Right cardiac atrium (tissue), 5 donors: ENCODE measurements at regions of chr6 and their contacts with region 1.

Region 1: GRCh38 chr6:150238336-150238741 is 95.5 kb downstream of the PPP1R14C start:
- DNase-seq: peak; percentile 33 to 72 (median 71)
- ATAC-seq: peak; percentile 82 to 90
- H3K4me3 ChIP-seq: no peak overlapping the region
- H3K27ac ChIP-seq: no peak overlapping the region
- H3K4me1 ChIP-seq: peaks cover 3% of the 10 kb centered on the region
- H3K27me3 ChIP-seq: no peaks in the 10 kb centered on the region

Region 2: GRCh38 chr6:149834513-149835481 is 403.5 kb before region 1 on chr6:
- intact Hi-C with region 1: no loop called
- DNase-seq: peak in 1 of 3 donors; percentile 60
- ATAC-seq: peak; percentile 38 to 47
- H3K4me3 ChIP-seq: no peak overlapping the region
- H3K27ac ChIP-seq: no peak overlapping the region
- H3K4me1 ChIP-seq: no peaks in the 10 kb centered on the region
- H3K27me3 ChIP-seq: no peaks in the 10 kb centered on the region

Region 3: DNA sequence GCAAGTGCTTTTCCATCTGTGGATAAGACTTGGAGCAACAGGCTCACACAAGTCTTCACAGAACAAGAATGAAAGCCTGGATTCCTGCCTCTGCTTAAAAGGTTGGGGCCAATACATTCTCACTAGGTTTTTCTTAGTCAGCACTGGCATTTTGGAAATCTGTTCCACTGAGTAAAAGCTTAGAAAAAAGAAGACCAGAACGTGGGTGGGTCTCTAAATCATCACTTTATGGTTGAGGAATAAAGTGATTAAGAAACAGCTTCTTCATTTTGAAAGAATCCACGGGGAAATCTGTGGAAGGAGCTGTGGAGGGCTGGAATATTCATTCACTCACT is 84.8 kb before region 1 on chr6:
- intact Hi-C with region 1: loop called in 1 of 4 experiments (anchors 10 kb)
- DNase-seq: no peak
- ATAC-seq: no peak
- H3K4me3 ChIP-seq: no peak overlapping the region
- H3K27ac ChIP-seq: no peak overlapping the region
- H3K4me1 ChIP-seq: peaks cover 3% of the 10 kb centered on the region
- H3K27me3 ChIP-seq: no peaks in the 10 kb centered on the region